Mammary epithelial cell (primary cell): ENCODE measurements at regions of chr5 and their contacts with region 1.

Region 1: GRCh38 chr5:134406390-134406789 is 5.3 kb downstream of the CDKN2AIPNL start:
- DNase-seq: no peak
- H3K4me3 ChIP-seq: no peak overlapping the region
- H3K27ac ChIP-seq: no peak overlapping the region
- H3K4me1 ChIP-seq: peaks cover 14% of the 10 kb centered on the region
- H3K27me3 ChIP-seq: no peaks in the 10 kb centered on the region
- CTCF ChIP-seq: no peak

Region 2: GRCh38 chr5:134374232-134374631 is 32.2 kb before region 1 on chr5:
- CTCF ChIA-PET with region 1: no interaction called
- dilution Hi-C with region 1: no loop called
- in situ Hi-C with region 1: no loop called
- intact Hi-C with region 1: no loop called
- DNase-seq: no peak
- H3K4me3 ChIP-seq: no peak overlapping the region
- H3K27ac ChIP-seq: no peak overlapping the region
- H3K4me1 ChIP-seq: peaks cover 9% of the 10 kb centered on the region
- H3K27me3 ChIP-seq: no peaks in the 10 kb centered on the region
- CTCF ChIP-seq: no peak

Region 3: DNA sequence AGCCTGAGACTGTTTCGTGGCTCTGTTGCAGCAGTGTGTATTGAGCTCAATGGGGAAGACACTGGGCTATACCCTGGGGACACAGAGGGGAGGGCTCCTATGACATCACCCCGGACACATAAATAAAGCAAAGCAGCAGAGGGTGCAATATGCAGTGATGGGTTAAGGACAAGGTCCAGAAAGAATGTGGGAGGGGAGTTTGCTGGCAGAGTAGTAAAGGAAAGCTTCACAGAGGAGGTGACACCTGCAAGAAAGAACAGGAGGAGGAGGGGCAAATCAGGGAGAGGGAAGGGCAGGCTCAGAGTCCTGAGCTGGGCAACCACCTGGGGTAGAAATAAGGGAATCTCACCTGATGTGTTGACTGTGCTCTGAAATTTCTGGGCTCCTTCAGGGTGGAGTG is 40.5 kb after region 1 on chr5:
- CTCF ChIA-PET with region 1: no interaction called
- dilution Hi-C with region 1: loop called (anchors 5 kb)
- in situ Hi-C with region 1: no loop called
- intact Hi-C with region 1: no loop called
- DNase-seq: no peak
- H3K4me3 ChIP-seq: no peak overlapping the region
- H3K27ac ChIP-seq: no peak overlapping the region
- H3K4me1 ChIP-seq: peaks cover 11% of the 10 kb centered on the region
- H3K27me3 ChIP-seq: no peaks in the 10 kb centered on the region
- CTCF ChIP-seq: no peak